T-cell (primary cell): ENCODE measurements at regions of chr10 and their contacts with region 1.

Region 1: DNA sequence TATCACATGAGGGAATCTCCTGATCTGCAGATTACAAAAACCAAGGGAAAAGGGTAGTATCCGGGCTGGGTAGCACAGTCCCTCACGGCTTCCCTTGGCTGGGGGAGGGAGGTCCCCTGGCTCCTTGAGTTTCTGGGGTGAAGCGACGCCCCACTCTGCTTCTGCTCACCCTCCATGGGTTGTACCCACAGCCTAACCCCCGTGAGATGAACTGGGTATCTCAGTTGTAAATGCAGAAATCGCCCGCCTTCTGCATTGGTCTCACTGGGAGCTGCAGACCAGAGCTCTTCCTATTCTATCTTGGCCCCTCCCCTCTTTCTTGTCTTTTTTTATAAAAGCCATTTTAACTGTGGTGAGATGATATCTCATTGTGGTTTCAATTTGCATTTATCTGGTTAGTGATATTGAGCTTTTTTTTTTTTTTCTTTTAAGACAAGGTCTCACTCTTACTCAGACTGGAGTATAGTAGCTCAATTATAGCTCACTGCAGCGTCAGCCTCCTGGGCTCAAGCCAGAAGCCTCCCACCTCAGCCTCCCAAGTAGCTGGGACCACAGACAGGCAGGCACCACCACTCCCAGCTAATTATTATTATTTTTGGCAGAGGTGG is 87.8 kb downstream of the ABCC2 start:
- DNase-seq: peak in 18 of 35 experiments; percentile 1 to 67 (median 10)
- ATAC-seq: peak; percentile 78 to 88 (median 87)
- H3K4me3 ChIP-seq: peak overlapping the region in 1 of 2 donors; percentile 5
- H3K4me3 Mint-ChIP-seq: peak overlapping the region; percentile 28 to 63 (median 40)
- H3K27ac ChIP-seq: no peak overlapping the region
- H3K27ac Mint-ChIP-seq: no peak overlapping the region
- H3K4me1 ChIP-seq: peaks cover 3 to 19% of the 10 kb centered on the region in 2 experiments
- H3K4me1 Mint-ChIP-seq: peaks cover 19 to 23% (median 21%) of the 10 kb centered on the region in 3 donors
- H3K27me3 ChIP-seq: peaks cover 0 to 38% of the 10 kb centered on the region in 2 experiments
- H3K27me3 Mint-ChIP-seq: peaks cover 64 to 79% of the 10 kb centered on the region in 2 donors

Region 2: GRCh38 chr10:99809931-99810615 is 60.2 kb before region 1 on chr10:
- CTCF ChIA-PET with region 1: no interaction called
- POLR2A ChIA-PET with region 1: no interaction called
- DNase-seq: no peak
- ATAC-seq: no peak
- H3K4me3 ChIP-seq: no peak overlapping the region
- H3K4me3 Mint-ChIP-seq: no peak overlapping the region
- H3K27ac ChIP-seq: no peak overlapping the region
- H3K27ac Mint-ChIP-seq: no peak overlapping the region
- H3K4me1 ChIP-seq: no peaks in the 10 kb centered on the region
- H3K4me1 Mint-ChIP-seq: no peaks in the 10 kb centered on the region
- H3K27me3 ChIP-seq: no peaks in the 10 kb centered on the region
- H3K27me3 Mint-ChIP-seq: no peaks in the 10 kb centered on the region

Region 3: GRCh38 chr10:99883523-99883922 is 13.3 kb after region 1 on chr10:
- CTCF ChIA-PET with region 1: no interaction called
- POLR2A ChIA-PET with region 1: interaction called in 1 of 2 experiments, 11 read pairs
- DNase-seq: no peak
- ATAC-seq: no peak
- H3K4me3 ChIP-seq: no peak overlapping the region
- H3K4me3 Mint-ChIP-seq: no peak overlapping the region
- H3K27ac ChIP-seq: no peak overlapping the region
- H3K27ac Mint-ChIP-seq: no peak overlapping the region
- H3K4me1 ChIP-seq: no peaks in the 10 kb centered on the region
- H3K4me1 Mint-ChIP-seq: peaks cover 1 to 7% (median 5%) of the 10 kb centered on the region in 3 donors
- H3K27me3 ChIP-seq: no peaks in the 10 kb centered on the region
- H3K27me3 Mint-ChIP-seq: no peaks in the 10 kb centered on the region